Endothelial cell of umbilical vein (primary cell): ENCODE measurements at regions of chr17 and their contacts with region 1.

Region 1: GRCh38 chr17:50686494-50687199 is 21.1 kb downstream of the ANKRD40 start:
- DNase-seq: peak; percentile 28
- H3K4me3 ChIP-seq: no peak overlapping the region
- H3K27ac ChIP-seq: no peak overlapping the region
- H3K4me1 ChIP-seq: peaks cover 3% of the 10 kb centered on the region
- H3K27me3 ChIP-seq: no peaks in the 10 kb centered on the region
- CTCF ChIP-seq: no peak
- POLR2A ChIP-seq: no peak

Region 2: DNA sequence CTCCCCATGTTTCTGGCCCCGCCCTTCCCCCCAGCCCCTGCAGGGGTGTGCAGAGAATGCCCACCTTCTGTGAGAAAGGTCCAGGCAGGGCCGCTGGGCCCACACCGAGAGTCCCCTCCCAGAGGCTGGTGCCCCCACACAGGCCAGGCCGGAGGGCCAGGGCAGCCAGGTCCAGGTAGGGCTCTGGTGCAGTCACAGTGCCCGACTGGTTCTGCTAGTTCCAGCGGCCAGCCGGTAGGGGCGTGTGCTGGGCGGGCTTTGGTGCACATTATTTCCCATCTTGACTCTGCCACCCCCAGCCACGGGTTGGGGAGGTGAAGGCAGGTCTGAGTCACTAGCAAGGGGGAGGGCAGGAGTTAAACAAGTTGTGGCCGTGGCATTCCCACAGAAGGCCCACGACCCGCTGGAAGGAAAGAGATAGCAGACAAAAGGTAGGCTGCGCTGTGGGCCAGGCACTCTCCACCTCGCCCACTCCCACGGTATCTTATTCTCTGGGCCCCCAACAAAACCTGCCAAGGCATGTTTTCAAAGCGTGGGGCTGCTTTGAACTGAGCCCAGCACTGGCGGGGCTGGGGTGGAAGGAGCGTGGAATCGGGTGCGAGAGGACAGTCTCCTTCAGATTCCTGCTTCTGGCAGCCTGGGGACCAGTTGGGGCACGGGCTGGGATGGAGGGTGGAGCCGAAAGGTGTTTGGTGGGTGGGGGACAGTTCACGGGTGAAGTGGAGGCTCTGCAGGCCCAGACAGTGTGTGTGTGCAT is 152.2 kb before region 1 on chr17:
- CTCF ChIA-PET with region 1: no interaction called
- POLR2A ChIA-PET with region 1: no interaction called
- dilution Hi-C with region 1: no loop called
- intact Hi-C with region 1: no loop called
- DNase-seq: no peak
- H3K4me3 ChIP-seq: no peak overlapping the region
- H3K27ac ChIP-seq: no peak overlapping the region
- H3K4me1 ChIP-seq: no peaks in the 10 kb centered on the region
- H3K27me3 ChIP-seq: peaks cover 13 to 26% of the 10 kb centered on the region in 2 experiments
- CTCF ChIP-seq: peak; percentile 12 to 54
- POLR2A ChIP-seq: no peak

Region 3: GRCh38 chr17:50697663-50698274 is 11.1 kb after region 1 on chr17:
- CTCF ChIA-PET with region 1: interaction called, 27 read pairs
- POLR2A ChIA-PET with region 1: no interaction called
- dilution Hi-C with region 1: no loop called
- intact Hi-C with region 1: no loop called
- DNase-seq: no peak
- H3K4me3 ChIP-seq: no peak overlapping the region
- H3K27ac ChIP-seq: no peak overlapping the region
- H3K4me1 ChIP-seq: no peaks in the 10 kb centered on the region
- H3K27me3 ChIP-seq: no peaks in the 10 kb centered on the region
- CTCF ChIP-seq: no peak
- POLR2A ChIP-seq: no peak